ENCODE measurements at regions of chr4 and their contacts with region 1.

Region 1: DNA sequence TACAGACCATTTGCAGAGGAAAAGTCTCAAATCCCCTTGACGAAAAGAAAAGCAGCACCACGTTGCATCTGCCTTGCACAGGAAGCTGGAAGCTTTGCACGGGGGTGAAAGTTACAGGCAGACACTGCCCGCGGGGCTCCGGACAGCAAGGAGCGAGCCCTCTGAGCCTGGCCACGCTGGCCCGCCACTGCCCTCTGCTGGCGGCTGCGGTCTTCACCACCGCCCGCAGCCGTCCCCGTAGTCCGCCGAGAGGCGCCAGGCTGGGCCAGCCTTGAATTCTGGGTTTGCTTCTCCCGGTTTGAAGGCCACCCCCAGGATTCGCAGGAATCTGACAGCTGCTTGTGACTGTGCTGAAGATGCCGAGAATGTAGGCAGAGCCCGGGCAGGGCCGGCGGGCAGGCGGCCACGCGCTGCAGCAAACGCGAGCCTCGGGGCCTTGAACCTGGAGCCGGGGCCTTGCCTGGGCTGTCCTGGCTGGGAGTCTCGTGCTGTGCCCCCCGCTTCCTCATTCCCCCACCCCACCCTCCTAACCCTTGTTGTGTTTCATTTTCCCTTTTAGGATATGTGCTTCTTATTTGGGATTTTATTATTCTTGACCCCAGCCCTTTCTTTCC is 49.2 kb downstream of the ENPP6 start:
- DNase-seq: peak; percentile 64 to 83
- ATAC-seq: peak; percentile 94 to 97 (median 96)
- H3K4me3 ChIP-seq: peak overlapping the region in 3 of 10 donors; percentile 18 to 19 (median 18)
- H3K27ac ChIP-seq: no peak overlapping the region
- H3K4me1 ChIP-seq: peaks cover 0 to 9% (median 0%) of the 10 kb centered on the region in 9 donors
- H3K27me3 ChIP-seq: peaks cover 0 to 37% (median 5%) of the 10 kb centered on the region in 7 donors
- CTCF ChIP-seq: peak; percentile 89 to 99 (median 97)

Region 2: GRCh38 chr4:183471946-183472708 is 696.4 kb before region 1 on chr4:
- intact Hi-C with region 1: loop called in 5 of 10 experiments (anchors 5 to 10 kb)
- DNase-seq: peak; percentile 78 to 88
- ATAC-seq: peak; percentile 68 to 95 (median 92)
- H3K4me3 ChIP-seq: peak overlapping the region in 6 of 10 donors; percentile 3 to 36 (median 12)
- H3K27ac ChIP-seq: peak overlapping the region in 4 of 10 donors; percentile 16 to 53 (median 30)
- H3K4me1 ChIP-seq: peaks cover 0 to 25% (median 8%) of the 10 kb centered on the region in 9 donors
- H3K27me3 ChIP-seq: peaks cover 0 to 8% (median 0%) of the 10 kb centered on the region in 7 donors
- CTCF ChIP-seq: peak; percentile 85 to 97 (median 91)

Region 3: DNA sequence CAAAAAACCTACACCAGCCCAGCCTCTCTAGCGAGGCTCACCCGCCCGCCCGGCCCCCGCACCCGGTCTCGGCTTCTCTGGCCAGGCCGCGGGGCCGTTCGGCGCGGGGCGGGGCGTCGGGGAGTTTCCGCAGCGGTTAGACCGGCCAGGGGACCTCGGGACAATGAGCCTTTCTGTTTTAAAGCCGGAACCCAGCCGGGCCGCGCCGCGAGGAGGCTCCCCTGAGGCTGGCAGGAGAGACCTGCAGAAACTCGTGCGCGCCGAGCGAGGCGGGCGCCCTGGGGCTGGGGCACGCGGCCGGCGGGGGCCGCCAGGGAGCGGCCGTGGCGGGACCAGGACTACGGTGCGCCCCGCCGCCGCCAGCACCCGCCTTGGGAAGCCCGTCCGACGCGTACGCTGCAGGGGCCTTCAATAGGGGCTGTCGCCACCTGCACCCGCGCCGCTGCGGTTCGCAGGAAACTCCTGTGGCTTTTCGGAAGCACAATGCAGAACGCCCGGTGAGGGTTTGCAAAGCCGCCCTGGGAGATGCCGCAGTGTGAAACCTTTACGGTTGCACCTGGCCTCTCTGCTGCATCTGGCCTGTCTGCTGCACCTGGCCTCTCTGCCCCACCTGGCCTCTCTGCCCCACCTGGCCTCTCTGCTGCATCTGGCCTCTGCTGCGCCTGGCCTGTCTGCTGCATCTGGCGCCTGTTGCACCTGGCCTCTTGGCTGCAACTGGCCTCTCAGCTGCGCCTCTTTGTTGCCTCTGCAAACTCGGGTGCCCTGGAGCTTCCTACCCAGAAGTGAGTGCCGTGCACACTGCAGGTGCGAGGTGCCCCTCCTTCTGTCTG is 445.6 kb before region 1 on chr4:
- intact Hi-C with region 1: loop called in 3 of 10 experiments (anchors 5 to 10 kb)
- DNase-seq: peak; percentile 65 to 75
- ATAC-seq: peak; percentile 64 to 84 (median 79)
- H3K4me3 ChIP-seq: peak overlapping the region; percentile 41 to 66 (median 58)
- H3K27ac ChIP-seq: peak overlapping the region in 9 of 10 donors; percentile 30 to 75 (median 58)
- H3K4me1 ChIP-seq: peaks cover 0 to 18% (median 7%) of the 10 kb centered on the region in 9 donors
- H3K27me3 ChIP-seq: peaks cover 0 to 6% (median 0%) of the 10 kb centered on the region in 7 donors
- CTCF ChIP-seq: peak in 2 of 9 donors; percentile 24 to 47

Region 4: DNA sequence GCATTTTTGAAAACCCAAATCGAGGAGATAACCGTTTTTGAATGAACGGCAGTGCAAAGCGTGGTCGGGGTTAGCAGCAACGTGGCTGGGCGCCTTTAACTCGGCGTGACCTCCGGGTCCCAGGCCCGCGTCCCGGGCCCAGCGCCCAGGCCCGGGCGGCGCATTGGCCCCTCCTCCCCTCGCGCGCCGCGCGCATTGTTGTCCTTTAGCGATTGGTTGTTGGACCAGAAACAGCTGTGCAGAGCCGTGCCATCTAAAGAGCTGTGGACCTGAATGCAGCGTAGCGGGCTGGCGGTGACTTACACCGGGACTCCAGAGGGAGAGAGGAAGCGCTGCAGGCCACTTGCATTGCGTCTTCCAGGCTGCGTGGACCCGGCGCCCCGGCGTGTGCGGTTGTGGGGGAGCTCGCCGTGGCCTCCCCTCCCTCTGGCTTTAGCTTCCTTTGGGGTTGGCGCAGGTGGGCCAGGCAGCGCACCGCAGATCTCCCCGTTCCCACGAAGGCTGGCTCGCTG is 263.4 kb before region 1 on chr4 and contains the start of gene STOX2:
- intact Hi-C with region 1: loop called in 1 of 10 experiments (anchors 10 kb)
- DNase-seq: peak; percentile 88
- ATAC-seq: peak; percentile 92 to 97 (median 95)
- H3K4me3 ChIP-seq: peak within 1 kb of the TSS; percentile 51 to 93 (median 76)
- H3K27ac ChIP-seq: peak within 1 kb of the TSS; percentile 77 to 92 (median 89)
- H3K4me1 ChIP-seq: peaks cover 0 to 50% (median 25%) of the 10 kb centered on the region in 9 donors
- H3K27me3 ChIP-seq: peaks cover 0 to 44% (median 0%) of the 10 kb centered on the region in 7 donors
- CTCF ChIP-seq: no peak
- total RNA-seq, gene STOX2: 8.3 to 25.5 (median 13.9) TPM

Region 5: GRCh38 chr4:184201179-184201578 is 32.7 kb after region 1 on chr4:
- intact Hi-C with region 1: no loop called
- DNase-seq: no peak
- ATAC-seq: no peak
- H3K4me3 ChIP-seq: no peak overlapping the region
- H3K27ac ChIP-seq: no peak overlapping the region
- H3K4me1 ChIP-seq: no peaks in the 10 kb centered on the region
- H3K27me3 ChIP-seq: no peaks in the 10 kb centered on the region
- CTCF ChIP-seq: no peak

Region 6: GRCh38 chr4:184228056-184228705 is 59.7 kb after region 1 on chr4:
- intact Hi-C with region 1: loop called in 1 of 10 experiments (anchors 10 kb)
- DNase-seq: no peak
- ATAC-seq: no peak
- H3K4me3 ChIP-seq: no peak overlapping the region
- H3K27ac ChIP-seq: no peak overlapping the region
- H3K4me1 ChIP-seq: peaks cover 0 to 14% (median 5%) of the 10 kb centered on the region in 9 donors
- H3K27me3 ChIP-seq: peaks cover 0 to 11% (median 0%) of the 10 kb centered on the region in 7 donors
- CTCF ChIP-seq: no peak

Measured in heart right ventricle (tissue), 16 donors.